ENCODE measurements at regions of chr3 and their contacts with region 1.

Region 1: DNA sequence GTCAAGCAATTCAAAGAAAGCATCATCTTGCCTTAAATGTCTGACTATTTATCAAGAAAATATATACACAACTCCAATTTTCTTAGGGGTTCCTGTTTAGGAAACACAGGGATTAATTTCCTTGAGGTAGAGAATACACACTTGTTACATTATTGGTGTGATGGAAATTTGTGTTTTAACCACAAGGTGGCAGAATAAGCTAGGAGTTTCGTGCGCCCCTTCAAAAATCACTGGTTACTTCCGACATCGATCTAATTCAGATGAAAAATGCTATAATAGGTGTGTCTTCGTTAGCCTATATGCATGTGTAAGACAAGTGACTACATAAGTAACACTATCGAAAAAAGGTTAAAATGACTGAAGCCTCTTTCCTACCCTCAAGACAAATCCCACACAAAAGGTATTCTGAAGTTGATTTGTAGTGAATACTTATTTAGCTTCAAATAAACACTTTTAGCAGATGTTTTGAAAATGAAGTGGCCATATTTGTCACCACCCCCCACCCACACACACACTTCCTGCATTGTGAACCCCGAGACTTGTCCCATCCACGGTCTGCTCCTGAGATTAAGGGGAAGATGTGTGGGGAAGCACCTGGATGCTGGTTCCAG is 246.5 kb downstream of the ROBO1 start:
- DNase-seq: peak; percentile 32
- ATAC-seq: peak; percentile 66; the same call in 1 of the 2 replicates
- H3K4me3 ChIP-seq: no peak overlapping the region
- H3K27ac ChIP-seq: no peak overlapping the region
- H3K4me1 ChIP-seq: no peaks in the 10 kb centered on the region
- H3K27me3 ChIP-seq: no peaks in the 10 kb centered on the region
- CTCF ChIP-seq: peak; percentile 63
- POLR2A ChIP-seq: no peak
- RAD21 ChIP-seq: peak; percentile 77

Region 2: GRCh38 chr3:79954756-79955155 is 433.4 kb after region 1 on chr3:
- CTCF ChIA-PET with region 1: no interaction called
- POLR2A ChIA-PET with region 1: no interaction called
- dilution Hi-C with region 1: no loop called
- in situ Hi-C with region 1: no loop called
- intact Hi-C with region 1: no loop called
- DNase-seq: no peak
- ATAC-seq: no peak
- H3K4me3 ChIP-seq: no peak overlapping the region
- H3K27ac ChIP-seq: no peak overlapping the region
- H3K4me1 ChIP-seq: no peaks in the 10 kb centered on the region
- H3K27me3 ChIP-seq: no peaks in the 10 kb centered on the region
- CTCF ChIP-seq: no peak
- POLR2A ChIP-seq: no peak
- RAD21 ChIP-seq: no peak

Region 3: DNA sequence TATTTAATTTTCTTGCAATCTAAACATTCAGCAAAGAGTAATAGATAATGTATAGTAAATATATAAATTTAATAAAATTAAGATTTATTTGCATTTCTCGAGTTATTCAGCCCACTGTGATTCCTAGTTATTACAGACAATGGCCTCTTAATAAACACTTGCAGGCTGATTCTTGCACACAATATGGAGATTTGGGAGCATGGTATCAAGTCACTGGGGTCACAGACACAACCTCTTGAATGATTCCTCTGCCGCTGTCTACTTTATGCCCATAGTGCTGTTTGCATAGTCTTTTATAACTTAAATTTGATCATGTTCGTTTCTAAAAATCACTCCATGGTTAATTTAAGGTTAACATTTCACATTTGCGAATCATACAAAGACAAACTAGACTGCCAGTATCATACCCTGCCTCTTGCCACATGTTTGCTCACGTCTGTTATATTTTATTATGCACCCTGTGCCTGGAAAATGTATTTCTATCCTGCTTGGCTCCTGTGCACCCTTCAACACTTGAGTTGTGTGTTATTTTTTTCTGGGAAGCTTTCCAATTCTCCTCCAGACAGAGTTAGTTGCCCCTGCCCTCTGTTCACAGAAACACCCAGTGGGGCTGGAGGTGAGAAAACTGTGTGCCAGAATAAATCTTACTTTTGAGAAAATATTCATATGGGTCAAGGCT is 452.7 kb after region 1 on chr3:
- CTCF ChIA-PET with region 1: no interaction called
- POLR2A ChIA-PET with region 1: no interaction called
- dilution Hi-C with region 1: no loop called
- in situ Hi-C with region 1: no loop called
- intact Hi-C with region 1: no loop called
- DNase-seq: no peak
- ATAC-seq: no peak
- H3K4me3 ChIP-seq: no peak overlapping the region
- H3K27ac ChIP-seq: no peak overlapping the region
- H3K4me1 ChIP-seq: no peaks in the 10 kb centered on the region
- H3K27me3 ChIP-seq: no peaks in the 10 kb centered on the region
- CTCF ChIP-seq: no peak
- POLR2A ChIP-seq: no peak
- RAD21 ChIP-seq: no peak

Region 4: DNA sequence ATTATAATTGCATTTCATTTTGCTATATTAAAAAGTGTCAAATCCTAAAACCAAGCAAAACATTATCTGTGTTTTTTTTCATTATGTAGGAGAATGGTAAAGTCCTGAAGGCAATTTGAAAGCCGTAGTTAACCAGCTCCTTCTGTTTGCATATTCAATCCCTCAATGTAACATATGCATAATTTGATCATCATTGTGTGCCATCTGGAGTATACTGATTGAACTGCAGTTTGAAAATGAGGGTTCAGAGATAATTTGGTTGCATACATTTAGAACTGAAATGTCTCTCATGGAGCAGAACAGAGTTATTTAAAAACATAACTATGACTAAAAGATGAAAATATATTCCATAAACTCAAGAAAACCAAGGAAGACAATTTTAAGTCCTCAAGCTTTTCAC is 1721.5 kb after region 1 on chr3:
- CTCF ChIA-PET with region 1: no interaction called
- POLR2A ChIA-PET with region 1: no interaction called
- dilution Hi-C with region 1: no loop called
- in situ Hi-C with region 1: loop called (anchors 10 kb)
- intact Hi-C with region 1: loop called (anchors 1 kb)
- DNase-seq: peak; percentile 3
- ATAC-seq: no peak
- H3K4me3 ChIP-seq: no peak overlapping the region
- H3K27ac ChIP-seq: no peak overlapping the region
- H3K4me1 ChIP-seq: no peaks in the 10 kb centered on the region
- H3K27me3 ChIP-seq: no peaks in the 10 kb centered on the region
- CTCF ChIP-seq: peak; percentile 37
- POLR2A ChIP-seq: no peak
- RAD21 ChIP-seq: peak; percentile 28; the same call in 1 of the 2 replicates

Region 5: DNA sequence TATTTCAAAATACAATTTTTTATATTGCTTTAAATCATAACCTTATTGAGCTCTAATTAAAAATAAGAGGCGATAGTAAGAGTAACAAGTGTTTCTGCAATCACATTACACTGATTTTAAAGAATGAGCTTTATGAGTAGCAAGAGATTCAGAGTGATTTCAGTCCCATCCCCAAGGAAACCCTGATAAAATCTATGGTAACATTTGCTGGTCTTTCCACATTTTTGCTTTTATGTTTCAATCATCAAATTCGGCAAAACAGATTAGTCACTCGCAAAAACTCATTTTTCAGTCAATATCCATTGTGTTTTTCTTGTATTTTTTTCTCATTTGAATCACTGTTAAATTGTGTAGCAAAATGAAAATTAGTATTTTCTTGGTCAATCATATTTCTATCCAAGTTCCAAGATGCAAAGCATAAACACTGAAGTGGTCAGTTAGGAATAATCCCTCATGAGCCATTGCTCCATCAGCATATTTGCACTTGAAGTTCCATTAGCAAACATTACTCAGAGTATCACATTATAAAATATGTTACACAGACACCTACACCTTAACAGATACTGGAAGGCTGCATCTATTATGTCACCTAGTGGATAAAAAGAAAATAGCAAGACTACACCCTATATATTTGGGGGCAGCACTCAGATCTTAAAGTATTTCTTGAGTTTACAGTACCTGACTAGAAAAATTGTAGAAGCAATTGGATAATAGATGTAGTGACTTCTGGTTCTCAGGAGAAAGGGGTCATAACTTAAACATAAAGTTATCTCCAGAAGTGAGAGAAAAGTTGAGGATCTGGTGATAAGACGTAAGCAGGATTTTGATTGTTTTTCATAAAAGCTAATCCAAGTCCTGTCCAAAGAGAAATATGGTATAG is 1817.6 kb after region 1 on chr3:
- CTCF ChIA-PET with region 1: no interaction called
- POLR2A ChIA-PET with region 1: no interaction called
- dilution Hi-C with region 1: no loop called
- in situ Hi-C with region 1: no loop called
- intact Hi-C with region 1: loop called (anchors 5 kb)
- DNase-seq: peak; percentile 6
- ATAC-seq: peak; percentile 35; the same call in 1 of the 2 replicates
- H3K4me3 ChIP-seq: no peak overlapping the region
- H3K27ac ChIP-seq: no peak overlapping the region
- H3K4me1 ChIP-seq: no peaks in the 10 kb centered on the region
- H3K27me3 ChIP-seq: no peaks in the 10 kb centered on the region
- CTCF ChIP-seq: peak; percentile 37; the same call in 1 of the 2 replicates
- POLR2A ChIP-seq: no peak
- RAD21 ChIP-seq: no peak

Measured in IMR-90 (cell line).